CD14-positive monocyte (primary cell): ENCODE measurements at regions of chr17 and their contacts with region 1.

Region 1: DNA sequence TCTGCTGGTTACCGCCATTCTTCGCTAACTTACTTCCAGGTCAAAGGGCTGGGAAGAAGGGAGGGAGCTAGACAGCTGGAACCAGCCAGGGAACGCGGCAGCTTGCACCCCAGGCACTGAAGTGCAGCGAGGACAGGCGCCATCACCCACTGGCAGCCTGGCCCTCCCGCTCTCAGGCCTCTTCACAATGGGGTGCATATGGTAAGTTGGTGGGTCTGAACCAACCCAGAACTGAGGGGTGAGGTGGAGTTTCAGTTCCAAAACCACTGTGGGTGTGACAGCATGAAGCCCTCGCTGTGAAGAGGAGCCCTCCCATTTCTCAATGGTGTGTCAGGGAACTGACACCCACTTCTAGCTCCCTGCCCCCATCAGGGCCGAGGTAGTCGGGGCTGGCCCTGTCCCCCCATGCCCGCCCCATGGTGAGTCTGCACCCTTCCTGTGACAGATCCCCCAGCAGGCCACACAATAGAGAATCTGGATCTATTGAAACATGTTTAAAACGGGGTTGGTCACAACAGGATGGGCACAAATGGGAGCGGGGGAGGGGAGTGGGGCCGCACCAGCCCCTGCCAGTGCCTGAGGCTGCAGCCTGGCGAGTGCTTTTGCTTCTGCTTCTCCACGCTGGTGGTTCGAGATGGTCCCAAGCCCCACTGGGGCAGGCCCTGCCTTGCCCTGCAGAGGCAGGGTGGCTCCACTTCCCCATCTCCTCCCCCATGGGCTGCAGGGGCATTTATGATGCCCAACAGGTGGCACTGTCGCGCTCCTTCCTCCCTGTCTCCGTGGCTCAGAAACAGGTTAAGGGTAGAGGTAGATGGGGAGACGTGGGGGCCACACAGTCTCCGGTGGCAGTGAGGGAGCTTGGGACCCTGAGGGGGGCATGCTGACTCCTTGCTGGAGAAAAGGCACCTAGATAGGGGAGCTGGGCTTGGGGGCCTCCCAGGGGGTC is 2.3 kb downstream of the LIMD2 start:
- DNase-seq: peak; percentile 81 to 83 (median 81)
- H3K4me3 ChIP-seq: peak overlapping the region; percentile 74 to 100 (median 92)
- H3K4me3 Mint-ChIP-seq: peak overlapping the region; percentile 95 to 97
- H3K27ac ChIP-seq: peak overlapping the region; percentile 70 to 85
- H3K27ac Mint-ChIP-seq: peak overlapping the region; percentile 82 to 95 (median 90)
- H3K4me1 ChIP-seq: peaks cover 56 to 73% of the 10 kb centered on the region in 2 donors
- H3K4me1 Mint-ChIP-seq: peaks cover 60% of the 10 kb centered on the region
- H3K27me3 ChIP-seq: no peaks in the 10 kb centered on the region
- H3K27me3 Mint-ChIP-seq: peaks cover 0 to 3% (median 0%) of the 10 kb centered on the region in 3 donors
- CTCF ChIP-seq: peak; percentile 87

Region 2: GRCh38 chr17:63293323-63294075 is 404.1 kb before region 1 on chr17:
- intact Hi-C with region 1: no loop called
- DNase-seq: peak in 1 of 3 donors; percentile 17
- H3K4me3 ChIP-seq: no peak overlapping the region
- H3K4me3 Mint-ChIP-seq: no peak overlapping the region
- H3K27ac ChIP-seq: no peak overlapping the region
- H3K27ac Mint-ChIP-seq: no peak overlapping the region
- H3K4me1 ChIP-seq: no peaks in the 10 kb centered on the region
- H3K4me1 Mint-ChIP-seq: no peaks in the 10 kb centered on the region
- H3K27me3 ChIP-seq: no peaks in the 10 kb centered on the region
- H3K27me3 Mint-ChIP-seq: no peaks in the 10 kb centered on the region
- CTCF ChIP-seq: no peak

Region 3: GRCh38 chr17:63390090-63390489 is 307.5 kb before region 1 on chr17:
- intact Hi-C with region 1: no loop called
- DNase-seq: no peak
- H3K4me3 ChIP-seq: no peak overlapping the region
- H3K4me3 Mint-ChIP-seq: no peak overlapping the region
- H3K27ac ChIP-seq: no peak overlapping the region
- H3K27ac Mint-ChIP-seq: no peak overlapping the region
- H3K4me1 ChIP-seq: no peaks in the 10 kb centered on the region
- H3K4me1 Mint-ChIP-seq: no peaks in the 10 kb centered on the region
- H3K27me3 ChIP-seq: no peaks in the 10 kb centered on the region
- H3K27me3 Mint-ChIP-seq: no peaks in the 10 kb centered on the region
- CTCF ChIP-seq: no peak

Region 4: GRCh38 chr17:63621766-63622519 is 75.7 kb before region 1 on chr17 and contains the start of gene MAP3K3:
- intact Hi-C with region 1: loop called in 1 of 2 experiments (anchors 5 kb)
- DNase-seq: peak; percentile 99 to 100 (median 100)
- H3K4me3 ChIP-seq: peak within 1 kb of the TSS; percentile 72 to 96 (median 92)
- H3K4me3 Mint-ChIP-seq: peak within 1 kb of the TSS; percentile 99
- H3K27ac ChIP-seq: peak within 1 kb of the TSS; percentile 67 to 74
- H3K27ac Mint-ChIP-seq: peak within 1 kb of the TSS; percentile 81 to 95 (median 92)
- H3K4me1 ChIP-seq: peaks cover 32 to 44% of the 10 kb centered on the region in 2 donors
- H3K4me1 Mint-ChIP-seq: peaks cover 39% of the 10 kb centered on the region
- H3K27me3 ChIP-seq: no peaks in the 10 kb centered on the region
- H3K27me3 Mint-ChIP-seq: peaks cover 4 to 10% (median 7%) of the 10 kb centered on the region in 3 donors
- CTCF ChIP-seq: peak; percentile 7
- polyA plus RNA-seq, gene MAP3K3: 52.2 to 219 (median 63.6) TPM

Region 5: DNA sequence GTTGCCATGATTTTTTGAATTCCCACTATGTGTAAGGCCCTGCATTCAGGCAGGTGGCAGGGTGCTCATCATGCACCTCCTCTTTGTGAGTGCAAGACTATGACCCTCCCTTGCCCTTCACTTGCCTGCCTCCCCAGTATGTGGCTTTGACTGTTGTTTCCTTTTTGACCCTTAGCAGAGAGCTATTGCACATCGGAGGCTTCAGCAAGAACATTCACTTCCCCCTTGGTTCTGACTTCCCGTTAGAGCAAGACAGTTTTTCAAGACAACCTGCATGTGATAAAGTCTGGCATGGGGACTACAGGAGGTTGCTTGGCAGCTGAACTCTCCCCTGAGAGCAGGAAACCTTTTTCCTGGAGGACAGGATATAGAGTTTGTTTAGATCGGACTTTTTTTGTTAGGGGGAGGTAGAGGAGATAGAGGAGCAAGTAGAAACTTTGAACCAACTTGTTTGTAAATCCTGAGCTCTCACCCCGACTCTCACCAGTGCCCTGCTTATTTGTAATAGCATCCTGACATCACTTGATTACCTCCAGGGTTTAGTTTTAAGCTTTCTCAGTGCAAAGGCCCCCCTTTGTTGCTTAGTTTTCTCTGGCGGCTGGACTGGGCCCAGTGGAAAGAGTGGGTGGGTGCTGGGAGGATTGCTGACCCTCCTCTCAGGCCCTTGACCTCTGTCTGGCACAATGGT is 31.9 kb before region 1 on chr17:
- intact Hi-C with region 1: no loop called
- DNase-seq: peak; percentile 74 to 82 (median 75)
- H3K4me3 ChIP-seq: peak overlapping the region in 1 of 3 experiments; percentile 53
- H3K4me3 Mint-ChIP-seq: peak overlapping the region; percentile 38 to 86
- H3K27ac ChIP-seq: peak overlapping the region; percentile 75 to 83
- H3K27ac Mint-ChIP-seq: peak overlapping the region; percentile 88 to 98 (median 97)
- H3K4me1 ChIP-seq: peaks cover 34 to 39% of the 10 kb centered on the region in 2 donors
- H3K4me1 Mint-ChIP-seq: peaks cover 37% of the 10 kb centered on the region
- H3K27me3 ChIP-seq: no peaks in the 10 kb centered on the region
- H3K27me3 Mint-ChIP-seq: no peaks in the 10 kb centered on the region
- CTCF ChIP-seq: no peak

Region 6: GRCh38 chr17:63741221-63742049 is 43.8 kb after region 1 on chr17 and contains the start of gene STRADA:
- intact Hi-C with region 1: loop called (anchors 5 kb)
- DNase-seq: peak; percentile 96 to 98 (median 97)
- H3K4me3 ChIP-seq: peak within 1 kb of the TSS; percentile 85 to 99 (median 98)
- H3K4me3 Mint-ChIP-seq: peak within 1 kb of the TSS; percentile 86 to 96
- H3K27ac ChIP-seq: peak within 1 kb of the TSS; percentile 84 to 87
- H3K27ac Mint-ChIP-seq: peak within 1 kb of the TSS; percentile 94 to 98 (median 98)
- H3K4me1 ChIP-seq: peaks cover 19 to 31% of the 10 kb centered on the region in 2 donors
- H3K4me1 Mint-ChIP-seq: peaks cover 23% of the 10 kb centered on the region
- H3K27me3 ChIP-seq: no peaks in the 10 kb centered on the region
- H3K27me3 Mint-ChIP-seq: no peaks in the 10 kb centered on the region
- CTCF ChIP-seq: no peak
- polyA plus RNA-seq, gene STRADA: 12.5 to 51.9 (median 19.8) TPM

Region 7: GRCh38 chr17:63773381-63774140 is 75.9 kb after region 1 on chr17 and contains the start of gene CCDC47:
- intact Hi-C with region 1: loop called (anchors 5 kb)
- DNase-seq: peak; percentile 98 to 99 (median 99)
- H3K4me3 ChIP-seq: peak within 1 kb of the TSS; percentile 93 to 96 (median 94)
- H3K4me3 Mint-ChIP-seq: peak within 1 kb of the TSS; percentile 92 to 96
- H3K27ac ChIP-seq: peak within 1 kb of the TSS; percentile 93 to 94
- H3K27ac Mint-ChIP-seq: peak within 1 kb of the TSS; percentile 99 to 100 (median 99)
- H3K4me1 ChIP-seq: peaks cover 39 to 54% of the 10 kb centered on the region in 2 donors
- H3K4me1 Mint-ChIP-seq: peaks cover 59% of the 10 kb centered on the region
- H3K27me3 ChIP-seq: no peaks in the 10 kb centered on the region
- H3K27me3 Mint-ChIP-seq: peaks cover 0 to 1% (median 0%) of the 10 kb centered on the region in 3 donors
- CTCF ChIP-seq: no peak
- polyA plus RNA-seq, gene CCDC47: 15.2 to 56.4 (median 43.0) TPM

Region 8: GRCh38 chr17:63842540-63843386 is 145.1 kb after region 1 on chr17 and contains the start of gene SMARCD2:
- intact Hi-C with region 1: loop called (anchors 5 kb)
- DNase-seq: peak; percentile 94 to 99 (median 98)
- H3K4me3 ChIP-seq: peak within 1 kb of the TSS; percentile 57 to 98 (median 92)
- H3K4me3 Mint-ChIP-seq: peak within 1 kb of the TSS; percentile 98
- H3K27ac ChIP-seq: peak within 1 kb of the TSS; percentile 84 to 85
- H3K27ac Mint-ChIP-seq: peak within 1 kb of the TSS; percentile 92 to 98 (median 96)
- H3K4me1 ChIP-seq: peaks cover 46 to 51% of the 10 kb centered on the region in 2 donors
- H3K4me1 Mint-ChIP-seq: peaks cover 46% of the 10 kb centered on the region
- H3K27me3 ChIP-seq: no peaks in the 10 kb centered on the region
- H3K27me3 Mint-ChIP-seq: peaks cover 0 to 3% (median 1%) of the 10 kb centered on the region in 3 donors
- CTCF ChIP-seq: no peak
- polyA plus RNA-seq, gene SMARCD2: 60.2 to 77.9 (median 64.0) TPM